Pancreas (tissue), 10 donors: ENCODE measurements at regions of chr7 and their contacts with region 1.

Region 1: GRCh38 chr7:24812310-24812945 is 55.2 kb upstream of the GSDME start:
- DNase-seq: peak in 4 of 6 donors; percentile 27 to 75 (median 64)
- ATAC-seq: peak; percentile 77 to 99 (median 96)
- H3K4me3 ChIP-seq: no peak overlapping the region
- H3K27ac ChIP-seq: no peak overlapping the region
- H3K4me1 ChIP-seq: no peaks in the 10 kb centered on the region
- H3K27me3 ChIP-seq: no peaks in the 10 kb centered on the region
- CTCF ChIP-seq: peak; percentile 74 to 93 (median 82)

Region 2: GRCh38 chr7:24637706-24638105 is 174.7 kb before region 1 on chr7:
- intact Hi-C with region 1: no loop called
- DNase-seq: no peak
- ATAC-seq: no peak
- H3K4me3 ChIP-seq: no peak overlapping the region
- H3K27ac ChIP-seq: no peak overlapping the region
- H3K4me1 ChIP-seq: no peaks in the 10 kb centered on the region
- H3K27me3 ChIP-seq: no peaks in the 10 kb centered on the region
- CTCF ChIP-seq: no peak

Region 3: DNA sequence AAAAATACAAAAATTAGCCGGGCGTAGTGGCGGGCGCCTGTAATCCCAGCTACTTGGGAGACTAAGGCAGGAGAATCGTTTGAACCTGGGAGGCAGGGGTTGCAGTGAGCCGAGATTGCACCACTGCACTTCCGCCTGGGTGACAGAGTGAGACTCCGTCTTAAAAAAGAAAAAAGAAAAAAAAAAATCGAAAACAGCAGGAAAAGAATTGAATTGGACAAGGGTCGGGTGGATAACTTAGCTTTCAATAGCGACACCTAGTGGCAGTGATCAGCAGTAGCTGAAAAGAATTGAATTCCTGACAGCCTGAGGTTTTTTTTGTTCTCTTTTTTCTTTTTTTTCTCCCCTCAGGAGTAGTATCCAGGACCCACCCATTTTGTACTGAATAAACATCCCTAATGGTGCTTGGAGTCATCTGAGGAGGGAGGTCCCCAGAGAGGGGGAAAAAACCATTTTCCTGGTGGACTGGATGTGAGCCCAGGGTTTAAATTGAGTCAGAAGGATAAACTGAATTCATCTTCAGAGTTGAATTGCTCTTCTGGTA is 257.5 kb after region 1 on chr7:
- intact Hi-C with region 1: loop called (anchors 2 to 10 kb)
- DNase-seq: peak in 3 of 6 donors; percentile 41 to 55 (median 53)
- ATAC-seq: peak; percentile 82 to 96 (median 92)
- H3K4me3 ChIP-seq: peak overlapping the region in 3 of 4 donors; percentile 12 to 38 (median 30)
- H3K27ac ChIP-seq: no peak overlapping the region
- H3K4me1 ChIP-seq: peaks cover 0 to 11% (median 0%) of the 10 kb centered on the region in 3 donors
- H3K27me3 ChIP-seq: no peaks in the 10 kb centered on the region
- CTCF ChIP-seq: peak; percentile 77 to 89 (median 82)

Region 4: DNA sequence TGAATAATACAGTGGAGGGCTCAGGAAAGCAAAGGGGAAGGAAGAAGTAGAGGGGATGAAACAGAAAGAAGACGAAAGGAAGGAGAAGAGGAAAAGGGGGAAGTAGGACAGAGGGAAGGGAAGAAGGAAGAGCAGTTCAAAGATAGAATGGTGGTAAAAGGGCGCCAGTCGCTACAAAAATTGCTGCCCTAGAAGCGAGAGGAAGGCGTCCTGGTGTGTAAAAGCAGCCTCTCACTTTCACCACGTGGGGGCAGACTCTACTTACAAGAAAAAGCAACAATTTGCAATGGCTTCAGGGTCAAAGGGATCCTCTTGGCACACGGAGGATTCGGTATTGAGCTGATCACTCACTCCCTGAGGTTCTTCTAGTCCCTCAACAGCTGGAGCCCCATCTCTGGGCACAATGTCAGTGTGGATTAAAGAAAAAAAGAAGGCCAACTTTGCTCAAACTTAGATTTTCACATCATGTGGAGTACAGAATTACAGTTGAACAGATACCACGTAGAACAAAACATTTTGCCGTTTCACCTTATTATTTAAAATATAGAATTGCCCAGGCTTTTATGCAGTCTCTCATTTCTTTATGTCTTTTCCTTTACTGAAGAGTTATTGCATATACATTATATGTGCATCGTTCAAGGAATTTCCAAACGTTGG is 447.3 kb after region 1 on chr7:
- intact Hi-C with region 1: no loop called
- DNase-seq: peak in 4 of 6 donors; percentile 29 to 82 (median 57)
- ATAC-seq: peak; percentile 82 to 93 (median 92)
- H3K4me3 ChIP-seq: no peak overlapping the region
- H3K27ac ChIP-seq: no peak overlapping the region
- H3K4me1 ChIP-seq: peaks cover 0 to 3% (median 0%) of the 10 kb centered on the region in 3 donors
- H3K27me3 ChIP-seq: no peaks in the 10 kb centered on the region
- CTCF ChIP-seq: peak; percentile 57 to 79 (median 71)